Ascending aorta (tissue), 2 donors: ENCODE measurements at regions of chr4 and their contacts with region 1.

Region 1: GRCh38 chr4:47686294-47686872 is 151.5 kb downstream of the CORIN start:
- DNase-seq: no peak
- H3K4me3 ChIP-seq: no peak overlapping the region
- H3K27ac ChIP-seq: no peak overlapping the region
- H3K4me1 ChIP-seq: no peaks in the 10 kb centered on the region
- H3K27me3 ChIP-seq: no peaks in the 10 kb centered on the region
- CTCF ChIP-seq: peak; percentile 7 to 41 (median 22)

Region 2: DNA sequence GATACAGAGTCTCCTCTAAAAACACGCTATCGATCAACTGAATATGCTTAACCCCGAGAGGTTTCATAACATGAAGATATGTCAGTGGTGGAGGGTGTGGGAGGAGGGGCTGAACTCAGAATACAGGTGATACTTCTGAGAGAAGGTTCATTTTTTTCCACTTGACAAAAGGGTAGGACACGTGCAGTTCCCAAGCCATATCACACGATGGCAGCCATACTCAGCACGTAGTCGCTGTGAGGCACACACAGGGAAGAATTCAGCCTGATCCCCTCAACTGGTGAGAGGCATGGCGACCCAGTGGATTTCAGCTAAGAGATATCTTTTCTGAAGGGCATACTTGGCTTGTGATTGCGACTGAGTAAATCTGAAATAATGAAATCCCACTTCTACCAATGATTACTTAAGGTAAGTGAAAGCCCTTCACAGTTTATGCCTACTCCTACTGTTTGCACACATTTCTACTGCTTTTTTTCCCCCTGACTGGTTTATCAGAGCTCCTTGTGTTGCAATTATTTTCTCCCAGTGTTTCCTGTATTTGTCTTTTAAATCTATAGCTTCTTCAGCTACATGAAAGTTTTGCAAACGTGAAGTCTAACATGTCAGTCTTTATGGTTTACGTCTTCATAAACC is 18.4 kb after region 1 on chr4:
- intact Hi-C with region 1: no loop called
- DNase-seq: no peak
- H3K4me3 ChIP-seq: no peak overlapping the region
- H3K27ac ChIP-seq: no peak overlapping the region
- H3K4me1 ChIP-seq: no peaks in the 10 kb centered on the region
- H3K27me3 ChIP-seq: no peaks in the 10 kb centered on the region
- CTCF ChIP-seq: peak in 1 of 3 experiments; percentile 22

Region 3: DNA sequence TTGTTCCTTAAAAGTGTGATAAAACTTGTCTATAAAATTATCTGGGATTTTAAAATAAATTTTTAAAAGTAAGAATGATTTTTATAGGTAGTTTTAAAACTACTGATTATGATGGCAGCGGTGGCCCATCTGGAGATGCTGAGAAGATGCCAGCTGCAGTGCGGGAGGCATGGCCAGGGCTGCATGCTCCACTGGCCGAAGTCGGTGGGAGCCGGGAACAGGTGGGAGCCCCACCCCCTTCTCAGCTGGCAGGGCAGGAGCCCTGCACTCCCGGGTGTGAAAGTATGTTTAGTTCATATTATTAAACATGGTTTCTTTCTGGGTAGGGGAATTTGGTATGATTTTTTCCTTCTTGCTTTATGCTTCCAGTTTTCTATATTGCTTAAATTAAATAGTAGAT is 87.7 kb after region 1 on chr4:
- intact Hi-C with region 1: no loop called
- DNase-seq: no peak
- H3K4me3 ChIP-seq: no peak overlapping the region
- H3K27ac ChIP-seq: no peak overlapping the region
- H3K4me1 ChIP-seq: no peaks in the 10 kb centered on the region
- H3K27me3 ChIP-seq: no peaks in the 10 kb centered on the region
- CTCF ChIP-seq: no peak

Region 4: DNA sequence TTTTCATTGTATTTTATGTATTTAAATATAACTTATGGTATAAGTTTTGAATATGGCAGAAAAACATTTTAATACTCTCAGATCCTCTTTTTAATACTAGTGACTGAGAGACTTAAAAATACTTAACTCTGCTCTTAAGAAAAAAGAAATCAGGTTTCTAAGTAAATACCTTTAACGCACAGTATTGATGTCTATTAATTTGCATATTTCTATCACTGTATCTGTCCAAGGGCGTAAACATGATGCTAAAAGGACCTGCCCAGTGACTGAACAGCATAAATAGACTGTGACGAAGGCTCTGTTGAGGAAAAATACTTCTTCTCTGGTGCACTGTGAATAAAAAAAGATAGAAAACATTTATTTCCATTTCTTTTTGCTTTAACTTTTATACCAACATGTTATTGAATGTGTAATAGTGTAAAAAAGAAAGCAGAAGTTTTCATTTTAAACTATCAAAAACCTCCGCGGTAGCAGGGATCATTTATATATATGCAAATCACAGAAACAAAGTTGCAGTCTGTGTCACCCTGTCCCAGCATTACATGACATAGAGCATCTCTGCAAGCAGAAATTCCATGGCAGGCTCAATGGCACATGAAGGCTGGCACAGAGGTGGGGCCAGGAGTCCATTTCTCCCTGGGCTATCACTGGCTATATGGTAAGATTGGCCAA is 879.1 kb after region 1 on chr4:
- intact Hi-C with region 1: loop called (anchors 10 kb)
- DNase-seq: no peak
- H3K4me3 ChIP-seq: no peak overlapping the region
- H3K27ac ChIP-seq: no peak overlapping the region
- H3K4me1 ChIP-seq: no peaks in the 10 kb centered on the region
- H3K27me3 ChIP-seq: no peaks in the 10 kb centered on the region
- CTCF ChIP-seq: no peak